Common myeloid progenitor, CD34-positive (primary cell): ENCODE measurements at regions of chr3 and their contacts with region 1.

Region 1: DNA sequence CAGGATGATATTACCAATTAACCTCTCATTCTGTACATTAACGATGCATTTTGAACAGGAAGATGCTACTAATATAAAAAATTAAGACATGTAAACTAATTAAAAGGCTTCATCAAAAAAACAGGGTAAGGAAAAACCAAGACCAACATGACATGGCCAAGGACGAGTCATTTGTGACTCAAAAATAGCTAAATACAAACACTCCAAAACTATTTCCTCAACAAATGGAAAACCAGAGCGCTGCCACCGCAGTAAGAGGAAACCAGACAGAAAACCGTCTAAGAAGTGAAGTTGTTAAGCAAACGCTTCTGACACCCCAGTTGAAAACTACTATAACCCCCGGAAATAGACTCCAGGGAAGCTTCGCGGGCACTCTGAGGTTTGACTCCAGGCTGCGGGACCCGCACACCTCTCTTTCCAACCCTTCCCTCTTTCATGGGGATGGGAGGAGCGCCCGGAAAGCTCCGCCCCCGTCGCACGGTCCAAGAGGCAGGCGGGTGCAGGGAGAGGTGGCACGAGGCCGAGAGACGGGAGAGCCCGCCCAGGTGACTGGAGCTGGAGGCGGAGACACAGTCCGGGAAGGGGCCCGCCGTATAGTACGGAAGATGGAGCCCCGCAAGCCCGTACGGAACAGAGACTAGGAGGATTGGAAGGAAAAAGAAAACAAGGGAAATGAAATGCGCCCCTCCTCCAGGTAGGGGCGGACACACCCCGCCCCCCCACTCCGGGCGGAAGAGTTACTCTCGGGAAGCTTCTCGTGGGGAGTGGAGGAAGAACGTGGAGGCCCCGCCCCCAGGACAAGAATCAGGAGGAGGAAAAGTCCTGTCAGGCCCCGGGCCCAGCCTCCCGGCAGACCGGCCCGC is 708 bp downstream of the DCAF1 start:
- DNase-seq: peak; percentile 91 to 96 (median 95)
- H3K4me3 ChIP-seq: peak overlapping the region; percentile 82 to 95 (median 87)
- H3K27ac ChIP-seq: peak overlapping the region; percentile 79 to 87
- H3K4me1 ChIP-seq: peaks cover 2 to 19% (median 12%) of the 10 kb centered on the region in 4 experiments
- H3K27me3 ChIP-seq: no peaks in the 10 kb centered on the region

Region 2: GRCh38 chr3:51269466-51269865 is 229.6 kb before region 1 on chr3:
- CTCF ChIA-PET with region 1: no interaction called
- POLR2A ChIA-PET with region 1: no interaction called
- DNase-seq: no peak
- H3K4me3 ChIP-seq: no peak overlapping the region
- H3K27ac ChIP-seq: no peak overlapping the region
- H3K4me1 ChIP-seq: peaks cover 0 to 2% (median 0%) of the 10 kb centered on the region in 4 experiments
- H3K27me3 ChIP-seq: no peaks in the 10 kb centered on the region

Region 3: GRCh38 chr3:51391075-51391567 is 108.0 kb before region 1 on chr3 and contains the start of gene RBM15B:
- CTCF ChIA-PET with region 1: interaction called, 12 read pairs
- POLR2A ChIA-PET with region 1: interaction called, 3 read pairs
- DNase-seq: peak; percentile 96 to 98 (median 98)
- H3K4me3 ChIP-seq: peak within 1 kb of the TSS; percentile 62 to 82 (median 76)
- H3K27ac ChIP-seq: peak within 1 kb of the TSS; percentile 56 to 78
- H3K4me1 ChIP-seq: peaks cover 7 to 79% (median 64%) of the 10 kb centered on the region in 4 experiments
- H3K27me3 ChIP-seq: no peaks in the 10 kb centered on the region

Region 4: GRCh38 chr3:51511000-51511399 is 11.9 kb after region 1 on chr3:
- CTCF ChIA-PET with region 1: interaction called, 14 read pairs
- POLR2A ChIA-PET with region 1: interaction called, 6 read pairs
- DNase-seq: no peak
- H3K4me3 ChIP-seq: no peak overlapping the region
- H3K27ac ChIP-seq: no peak overlapping the region
- H3K4me1 ChIP-seq: peaks cover 0 to 2% (median 0%) of the 10 kb centered on the region in 4 experiments
- H3K27me3 ChIP-seq: no peaks in the 10 kb centered on the region

Region 5: GRCh38 chr3:51622868-51623267 is 123.8 kb after region 1 on chr3:
- CTCF ChIA-PET with region 1: interaction called, 12 read pairs
- POLR2A ChIA-PET with region 1: no interaction called
- DNase-seq: peak in 2 of 3 donors; percentile 43 to 54
- H3K4me3 ChIP-seq: no peak overlapping the region
- H3K27ac ChIP-seq: peak overlapping the region in 1 of 2 experiments; percentile 11
- H3K4me1 ChIP-seq: peaks cover 3 to 42% (median 19%) of the 10 kb centered on the region in 4 experiments
- H3K27me3 ChIP-seq: no peaks in the 10 kb centered on the region

Region 6: GRCh38 chr3:51637941-51638471 is 138.9 kb after region 1 on chr3:
- CTCF ChIA-PET with region 1: interaction called, 125 read pairs
- POLR2A ChIA-PET with region 1: interaction called, 4 read pairs
- DNase-seq: peak; percentile 84 to 89 (median 85)
- H3K4me3 ChIP-seq: no peak overlapping the region
- H3K27ac ChIP-seq: no peak overlapping the region
- H3K4me1 ChIP-seq: no peaks in the 10 kb centered on the region
- H3K27me3 ChIP-seq: no peaks in the 10 kb centered on the region

Region 7: GRCh38 chr3:51670823-51671733 is 172.0 kb after region 1 on chr3 and contains the start of gene TEX264:
- CTCF ChIA-PET with region 1: interaction called, 44 read pairs
- POLR2A ChIA-PET with region 1: interaction called, 4 read pairs
- DNase-seq: peak; percentile 92 to 95 (median 94)
- H3K4me3 ChIP-seq: peak within 1 kb of the TSS; percentile 61 to 94 (median 87)
- H3K27ac ChIP-seq: peak within 1 kb of the TSS in 1 of 2 experiments; percentile 73
- H3K4me1 ChIP-seq: peaks cover 0 to 54% (median 41%) of the 10 kb centered on the region in 4 experiments
- H3K27me3 ChIP-seq: no peaks in the 10 kb centered on the region

Region 8: DNA sequence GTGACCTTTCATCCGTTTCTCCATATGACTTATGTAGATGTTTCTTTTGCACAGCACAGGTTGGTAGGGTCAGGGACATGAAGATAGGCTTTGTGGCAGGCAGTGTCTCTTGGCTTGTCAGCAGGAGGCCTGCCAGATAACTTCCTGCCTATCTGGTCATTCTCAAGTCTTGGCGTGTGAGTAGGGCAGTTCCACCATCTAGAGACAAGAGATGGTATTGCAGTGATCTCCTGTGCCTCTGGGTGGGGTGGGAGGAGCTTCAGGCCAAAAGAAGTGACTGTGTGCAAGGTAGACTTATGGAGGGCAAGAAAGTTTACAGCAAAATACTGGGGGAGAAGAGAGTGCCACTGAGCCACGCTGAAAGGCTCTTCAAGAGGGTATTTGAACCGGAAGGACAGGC is 183.0 kb after region 1 on chr3:
- CTCF ChIA-PET with region 1: interaction called, 46 read pairs
- POLR2A ChIA-PET with region 1: interaction called, 5 read pairs
- DNase-seq: peak; percentile 82 to 89 (median 87)
- H3K4me3 ChIP-seq: peak overlapping the region in 5 of 7 experiments; percentile 1 to 53 (median 31)
- H3K27ac ChIP-seq: no peak overlapping the region
- H3K4me1 ChIP-seq: peaks cover 12 to 74% (median 68%) of the 10 kb centered on the region in 4 experiments
- H3K27me3 ChIP-seq: no peaks in the 10 kb centered on the region